K562 (cell line): ENCODE measurements at regions of chr10 and their contacts with region 1.

Region 1: DNA sequence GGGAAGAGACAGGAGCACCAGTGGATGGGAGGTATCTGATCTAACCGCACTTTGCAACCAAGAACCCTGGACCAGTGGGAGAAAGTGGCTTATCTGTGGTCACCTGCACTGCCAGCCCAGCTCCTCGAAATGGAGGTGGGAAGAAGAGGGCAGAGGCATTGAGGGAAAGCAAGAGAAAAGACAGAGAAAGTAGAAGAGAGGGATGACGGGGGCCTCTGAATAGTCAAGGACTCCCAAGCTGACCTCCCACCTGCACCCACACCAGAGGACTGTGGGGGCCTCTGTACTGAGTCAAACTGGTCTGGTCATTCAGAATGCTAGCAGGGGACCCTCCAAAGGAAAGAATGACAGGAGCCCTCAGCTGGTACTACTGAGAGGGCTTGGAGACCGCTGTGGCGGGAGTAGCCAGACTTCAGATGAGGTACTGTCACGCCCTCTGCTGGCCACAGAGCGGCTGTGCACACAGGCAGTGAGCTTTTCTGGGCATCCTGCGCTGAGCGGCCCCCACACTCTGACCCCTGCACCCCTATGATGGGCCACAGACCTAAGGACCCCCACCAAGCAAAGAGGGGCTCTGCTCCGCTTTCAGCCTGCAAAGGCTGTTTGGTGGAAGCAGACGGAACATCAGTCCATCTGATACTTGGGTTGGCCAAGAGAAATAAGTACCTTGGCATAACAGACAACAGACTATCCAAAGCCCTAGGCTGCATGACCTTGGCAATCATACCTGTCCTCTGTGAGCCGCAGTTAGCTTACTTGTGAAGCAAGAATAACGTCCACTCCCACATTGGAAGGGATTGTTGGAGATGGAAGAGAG is 112.9 kb downstream of the COL13A1 start:
- DNase-seq: peak; percentile 81 to 88 (median 84)
- ATAC-seq: peak; percentile 98
- H3K4me3 ChIP-seq: no peak overlapping the region
- H3K27ac ChIP-seq: no peak overlapping the region
- H3K4me1 ChIP-seq: 0 out of 5 replicates have a peak, but pooled peaks cover 0 to 3% of the 10 kb centered on the region in 2 experiments
- H3K27me3 ChIP-seq: peaks cover 5 to 46% of the 10 kb centered on the region in 2 experiments; a peak in 3 of 5 replicates
- CTCF ChIP-seq: peak; percentile 91 to 97 (median 94)
- EP300 ChIP-seq: no peak
- POLR2A ChIP-seq: no peak
- RAD21 ChIP-seq: peak; percentile 88 to 94

Region 2: GRCh38 chr10:69527961-69528360 is 386.6 kb before region 1 on chr10:
- CTCF ChIA-PET with region 1: no interaction called
- POLR2A ChIA-PET with region 1: no interaction called
- in situ Hi-C with region 1: no loop called
- intact Hi-C with region 1: loop called (anchors 10 kb)
- DNase-seq: no peak
- ATAC-seq: no peak
- H3K4me3 ChIP-seq: no peak overlapping the region
- H3K27ac ChIP-seq: no peak overlapping the region
- H3K4me1 ChIP-seq: no peaks in the 10 kb centered on the region
- H3K27me3 ChIP-seq: peaks cover 0 to 20% of the 10 kb centered on the region in 2 experiments; a peak in 2 of 5 replicates
- CTCF ChIP-seq: no peak
- EP300 ChIP-seq: no peak
- POLR2A ChIP-seq: no peak
- RAD21 ChIP-seq: no peak

Region 3: GRCh38 chr10:69644658-69645295 is 269.8 kb before region 1 on chr10:
- CTCF ChIA-PET with region 1: interaction called, 8 read pairs
- POLR2A ChIA-PET with region 1: no interaction called
- in situ Hi-C with region 1: no loop called
- intact Hi-C with region 1: loop called (anchors 1 kb)
- DNase-seq: peak; percentile 69 to 81 (median 81)
- ATAC-seq: peak; percentile 87
- H3K4me3 ChIP-seq: no peak overlapping the region
- H3K27ac ChIP-seq: no peak overlapping the region
- H3K4me1 ChIP-seq: no peaks in the 10 kb centered on the region
- H3K27me3 ChIP-seq: peaks cover 0 to 71% of the 10 kb centered on the region in 2 experiments; a peak in 3 of 5 replicates
- CTCF ChIP-seq: peak; percentile 88 to 94 (median 92)
- EP300 ChIP-seq: no peak
- POLR2A ChIP-seq: no peak
- RAD21 ChIP-seq: peak; percentile 79 to 87

Region 4: GRCh38 chr10:69696073-69696731 is 218.4 kb before region 1 on chr10:
- CTCF ChIA-PET with region 1: no interaction called
- POLR2A ChIA-PET with region 1: interaction called, 3 read pairs
- in situ Hi-C with region 1: no loop called
- intact Hi-C with region 1: loop called (anchors 10 kb)
- DNase-seq: peak; percentile 65 to 86 (median 80)
- ATAC-seq: peak; percentile 98
- H3K4me3 ChIP-seq: no peak overlapping the region
- H3K27ac ChIP-seq: no peak overlapping the region
- H3K4me1 ChIP-seq: no peaks in the 10 kb centered on the region
- H3K27me3 ChIP-seq: peaks cover 0 to 7% of the 10 kb centered on the region in 2 experiments; a peak in 2 of 5 replicates
- CTCF ChIP-seq: peak; percentile 84 to 88 (median 88)
- EP300 ChIP-seq: no peak
- POLR2A ChIP-seq: no peak
- RAD21 ChIP-seq: peak; percentile 60 to 67

Region 5: GRCh38 chr10:69786791-69787190 is 127.8 kb before region 1 on chr10:
- CTCF ChIA-PET with region 1: interaction called, 3 read pairs
- POLR2A ChIA-PET with region 1: no interaction called
- in situ Hi-C with region 1: no loop called
- intact Hi-C with region 1: loop called (anchors 1 kb)
- DNase-seq: peak in 1 of 4 experiments; percentile 20
- ATAC-seq: peak; percentile 72
- H3K4me3 ChIP-seq: no peak overlapping the region
- H3K27ac ChIP-seq: no peak overlapping the region
- H3K4me1 ChIP-seq: no peaks in the 10 kb centered on the region
- H3K27me3 ChIP-seq: peaks cover 0 to 17% of the 10 kb centered on the region in 2 experiments; a peak in 1 of 5 replicates
- CTCF ChIP-seq: peak; percentile 36 to 54 (median 36); a peak in 3 of 6 replicates
- EP300 ChIP-seq: no peak
- POLR2A ChIP-seq: no peak
- RAD21 ChIP-seq: peak; percentile 40 to 59

Region 6: DNA sequence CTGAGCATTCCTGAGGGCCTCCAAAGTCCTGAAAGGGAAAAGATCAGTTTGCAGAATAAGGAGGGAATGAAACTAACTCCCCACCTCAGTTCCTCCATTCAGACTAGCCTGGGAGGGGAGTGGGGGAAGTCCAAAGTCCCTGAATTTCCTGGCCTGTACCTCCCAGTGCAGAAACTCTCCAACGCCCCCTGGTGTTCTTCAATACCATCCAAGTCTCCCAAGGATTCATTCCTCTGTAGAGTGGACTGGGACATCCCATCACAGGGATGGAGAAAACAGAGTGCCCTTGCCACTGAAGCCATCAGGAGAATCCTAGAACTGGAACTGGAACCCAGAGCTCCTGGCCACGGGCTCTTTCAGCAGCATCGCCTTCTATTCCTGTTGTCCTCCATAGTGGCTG is 114.5 kb before region 1 on chr10:
- CTCF ChIA-PET with region 1: no interaction called
- POLR2A ChIA-PET with region 1: interaction called, 3 read pairs
- in situ Hi-C with region 1: no loop called
- intact Hi-C with region 1: loop called (anchors 1 kb)
- DNase-seq: peak; percentile 48 to 69 (median 61)
- ATAC-seq: peak; percentile 87
- H3K4me3 ChIP-seq: no peak overlapping the region
- H3K27ac ChIP-seq: no peak overlapping the region
- H3K4me1 ChIP-seq: peaks cover 0 to 13% of the 10 kb centered on the region in 2 experiments; a peak in 1 of 5 replicates
- H3K27me3 ChIP-seq: peaks cover 17 to 59% of the 10 kb centered on the region in 2 experiments; a peak in 4 of 5 replicates
- CTCF ChIP-seq: peak; percentile 63 to 79 (median 75)
- EP300 ChIP-seq: no peak
- POLR2A ChIP-seq: no peak
- RAD21 ChIP-seq: peak; percentile 57 to 67